ENCODE measurements at regions of chr12 and their contacts with region 1.

Region 1: GRCh38 chr12:130053651-130054069 is 108.6 kb upstream of the FZD10 start:
- DNase-seq: no peak
- ATAC-seq: no peak

Region 2: DNA sequence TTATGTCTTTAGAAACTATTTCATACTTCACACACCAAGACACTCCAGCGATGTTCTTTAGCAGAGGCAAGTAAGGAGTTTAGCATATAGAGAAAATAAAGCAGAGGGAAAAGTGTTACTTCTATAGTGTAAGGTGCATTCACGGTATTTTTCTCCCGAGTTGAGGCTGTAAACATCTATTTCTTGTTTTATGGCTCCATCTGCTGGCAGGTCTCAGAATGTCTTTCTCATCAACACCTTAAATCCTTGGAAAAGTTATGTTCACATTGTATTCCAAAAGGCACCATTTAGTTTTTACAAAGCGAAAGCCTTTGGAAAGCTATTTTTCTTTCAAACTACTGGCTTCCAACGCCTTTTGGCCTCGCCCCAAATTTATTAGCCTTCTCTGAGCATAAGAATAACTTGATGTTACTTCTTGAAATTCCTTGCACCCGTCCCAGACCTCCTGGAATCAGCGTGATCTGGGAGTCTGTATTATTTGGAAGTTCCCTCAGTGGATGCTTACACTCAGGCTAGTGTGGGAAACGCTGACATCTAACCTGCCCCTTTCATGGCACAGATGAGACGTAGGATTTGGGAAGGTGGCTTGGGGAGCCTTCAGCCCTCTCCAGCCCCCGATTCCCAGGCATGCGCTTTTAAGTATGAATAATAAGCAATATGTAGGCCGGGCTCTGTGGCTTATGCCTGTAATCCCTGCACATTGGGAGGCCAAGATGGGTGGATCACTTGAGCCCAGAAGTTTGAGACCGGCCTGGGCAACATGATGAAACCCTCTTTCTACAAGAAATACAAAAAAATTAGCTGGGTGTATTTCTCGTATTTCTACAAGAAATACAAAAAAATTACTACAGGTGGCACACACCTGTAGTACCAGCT is 282.1 kb after region 1 on chr12:
- intact Hi-C with region 1: loop called (anchors 10 kb)
- DNase-seq: no peak
- ATAC-seq: no peak